ENCODE measurements at regions of chr14 and their contacts with region 1.

Region 1: GRCh38 chr14:92651106-92651757 is 97.2 kb downstream of the LGMN start:
- DNase-seq: peak; percentile 50 to 91 (median 87)
- ATAC-seq: peak; percentile 89
- H3K4me3 ChIP-seq: peak overlapping the region; percentile 82
- H3K4me3 Mint-ChIP-seq: peak overlapping the region; percentile 99 to 100 (median 100)
- H3K27ac ChIP-seq: peak overlapping the region; percentile 90
- H3K27ac Mint-ChIP-seq: peak overlapping the region; percentile 94 to 100 (median 99)
- H3K4me1 ChIP-seq: peaks cover 57 to 58% of the 10 kb centered on the region in 2 donors
- H3K4me1 Mint-ChIP-seq: peaks cover 65 to 82% (median 70%) of the 10 kb centered on the region in 7 donors
- H3K27me3 ChIP-seq: no peaks in the 10 kb centered on the region
- H3K27me3 Mint-ChIP-seq: no peaks in the 10 kb centered on the region

Region 2: DNA sequence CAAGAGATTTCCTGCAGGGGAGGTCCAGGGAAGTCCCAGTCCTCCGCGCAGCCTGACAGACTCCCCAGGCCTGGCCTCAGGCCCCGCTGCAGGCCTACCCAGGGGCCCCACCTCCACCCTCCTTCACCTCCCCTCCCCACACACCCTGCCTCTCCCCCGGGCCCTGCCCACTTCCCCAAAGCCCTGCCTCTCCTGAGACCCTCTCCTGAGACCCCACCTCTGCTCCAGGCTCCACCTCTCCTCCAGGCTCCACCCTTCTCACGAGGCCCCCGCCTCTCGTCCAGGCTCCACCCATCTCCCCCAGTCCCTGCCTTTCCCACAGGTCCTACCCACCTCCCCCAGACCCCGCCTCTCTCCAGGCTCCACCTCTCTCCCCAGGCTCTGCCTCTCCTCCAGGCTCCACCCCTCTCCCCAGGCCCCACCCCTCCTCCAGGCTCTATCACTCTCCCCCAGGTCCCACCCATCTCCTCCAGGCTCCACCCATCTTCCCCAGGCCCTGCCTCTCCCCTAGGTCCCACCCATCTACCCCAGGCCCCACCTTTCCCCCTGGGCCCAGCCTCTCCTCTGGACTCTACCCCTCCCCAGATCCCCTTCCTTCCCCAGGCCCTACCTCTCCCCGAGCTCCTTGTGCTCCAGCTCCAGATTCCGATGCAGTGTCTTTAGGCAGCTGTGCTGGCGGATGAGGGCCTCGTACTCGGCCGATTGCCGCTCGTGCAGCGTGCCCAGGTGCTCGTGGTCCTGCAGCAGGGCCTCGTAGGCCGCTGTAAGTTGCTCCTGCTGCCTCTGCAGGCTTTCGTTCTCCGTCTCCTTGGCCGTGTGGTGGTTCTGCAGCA is 1347.9 kb before region 1 on chr14:
- CTCF ChIA-PET with region 1: no interaction called
- POLR2A ChIA-PET with region 1: no interaction called
- intact Hi-C with region 1: no loop called
- DNase-seq: peak in 4 of 9 donors; percentile 27 to 62 (median 32)
- ATAC-seq: peak; percentile 81
- H3K4me3 ChIP-seq: no peak overlapping the region
- H3K4me3 Mint-ChIP-seq: no peak overlapping the region
- H3K27ac ChIP-seq: peak overlapping the region; percentile 39
- H3K27ac Mint-ChIP-seq: peak overlapping the region in 6 of 9 donors; percentile 32 to 85 (median 69)
- H3K4me1 ChIP-seq: peaks cover 0 to 4% of the 10 kb centered on the region in 2 donors
- H3K4me1 Mint-ChIP-seq: peaks cover 8 to 66% (median 26%) of the 10 kb centered on the region in 7 donors
- H3K27me3 ChIP-seq: no peaks in the 10 kb centered on the region
- H3K27me3 Mint-ChIP-seq: no peaks in the 10 kb centered on the region

Region 3: GRCh38 chr14:92121670-92122350 is 529.4 kb before region 1 on chr14 and contains the starts of genes CPSF2 and NDUFB1:
- CTCF ChIA-PET with region 1: no interaction called
- POLR2A ChIA-PET with region 1: interaction called, 13 read pairs
- intact Hi-C with region 1: loop called in 1 of 2 experiments (anchors 1 kb)
- DNase-seq: peak; percentile 74 to 87 (median 85)
- ATAC-seq: peak; percentile 92
- H3K4me3 ChIP-seq: peak within 1 kb of the TSS; percentile 78
- H3K4me3 Mint-ChIP-seq: peak within 1 kb of the TSS; percentile 88 to 100 (median 99)
- H3K27ac ChIP-seq: peak within 1 kb of the TSS; percentile 92
- H3K27ac Mint-ChIP-seq: peak within 1 kb of the TSS; percentile 96 to 100 (median 100)
- H3K4me1 ChIP-seq: peaks cover 17 to 19% of the 10 kb centered on the region in 2 donors
- H3K4me1 Mint-ChIP-seq: peaks cover 27 to 72% (median 53%) of the 10 kb centered on the region in 7 donors
- H3K27me3 ChIP-seq: no peaks in the 10 kb centered on the region
- H3K27me3 Mint-ChIP-seq: no peaks in the 10 kb centered on the region
- total RNA-seq, gene CPSF2: 30.2 to 77.4 (median 60.4) TPM
- total RNA-seq, gene NDUFB1: 55.1 to 107 (median 89.7) TPM

Region 4: GRCh38 chr14:92585981-92586937 is 65.0 kb before region 1 on chr14:
- CTCF ChIA-PET with region 1: interaction called, 3 read pairs
- POLR2A ChIA-PET with region 1: interaction called, 4 read pairs
- intact Hi-C with region 1: loop called (anchors 1 to 2 kb)
- DNase-seq: peak in 8 of 9 donors; percentile 46 to 78 (median 66)
- ATAC-seq: peak; percentile 80
- H3K4me3 ChIP-seq: peak overlapping the region; percentile 33
- H3K4me3 Mint-ChIP-seq: peak overlapping the region; percentile 67 to 87 (median 76)
- H3K27ac ChIP-seq: peak overlapping the region; percentile 70
- H3K27ac Mint-ChIP-seq: peak overlapping the region; percentile 90 to 98 (median 95)
- H3K4me1 ChIP-seq: peaks cover 89 to 90% of the 10 kb centered on the region in 2 donors
- H3K4me1 Mint-ChIP-seq: peaks cover 63 to 100% (median 96%) of the 10 kb centered on the region in 7 donors
- H3K27me3 ChIP-seq: no peaks in the 10 kb centered on the region
- H3K27me3 Mint-ChIP-seq: peaks cover 0 to 18% (median 0%) of the 10 kb centered on the region in 5 donors

Region 5: DNA sequence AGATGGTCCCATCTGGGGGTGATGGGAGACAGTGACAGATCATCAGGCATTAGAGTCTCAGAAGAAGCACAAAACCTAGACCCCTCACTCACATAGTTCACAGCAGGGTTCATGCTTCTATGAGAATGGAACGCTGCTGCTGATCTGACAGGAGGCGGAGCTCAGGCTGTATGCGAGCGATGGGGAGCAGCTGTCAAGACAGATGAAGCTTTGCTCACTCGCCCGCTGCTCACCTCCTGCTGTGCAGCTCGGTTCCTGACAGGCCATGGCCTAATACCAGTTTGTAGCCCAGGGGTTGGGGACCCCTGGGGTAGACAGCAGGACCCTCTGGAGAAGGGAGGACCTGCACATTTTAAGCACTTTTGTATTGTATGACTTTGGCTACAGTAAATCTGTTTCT is 14.0 kb before region 1 on chr14:
- CTCF ChIA-PET with region 1: interaction called, 3 read pairs
- POLR2A ChIA-PET with region 1: interaction called, 25 read pairs
- intact Hi-C with region 1: no loop called
- DNase-seq: no peak
- ATAC-seq: no peak
- H3K4me3 ChIP-seq: no peak overlapping the region
- H3K4me3 Mint-ChIP-seq: no peak overlapping the region
- H3K27ac ChIP-seq: no peak overlapping the region
- H3K27ac Mint-ChIP-seq: peak overlapping the region in 3 of 9 donors; percentile 46 to 64 (median 51)
- H3K4me1 ChIP-seq: no peaks in the 10 kb centered on the region
- H3K4me1 Mint-ChIP-seq: peaks cover 14 to 29% (median 19%) of the 10 kb centered on the region in 7 donors
- H3K27me3 ChIP-seq: no peaks in the 10 kb centered on the region
- H3K27me3 Mint-ChIP-seq: peaks cover 0 to 3% (median 0%) of the 10 kb centered on the region in 5 donors

Region 6: DNA sequence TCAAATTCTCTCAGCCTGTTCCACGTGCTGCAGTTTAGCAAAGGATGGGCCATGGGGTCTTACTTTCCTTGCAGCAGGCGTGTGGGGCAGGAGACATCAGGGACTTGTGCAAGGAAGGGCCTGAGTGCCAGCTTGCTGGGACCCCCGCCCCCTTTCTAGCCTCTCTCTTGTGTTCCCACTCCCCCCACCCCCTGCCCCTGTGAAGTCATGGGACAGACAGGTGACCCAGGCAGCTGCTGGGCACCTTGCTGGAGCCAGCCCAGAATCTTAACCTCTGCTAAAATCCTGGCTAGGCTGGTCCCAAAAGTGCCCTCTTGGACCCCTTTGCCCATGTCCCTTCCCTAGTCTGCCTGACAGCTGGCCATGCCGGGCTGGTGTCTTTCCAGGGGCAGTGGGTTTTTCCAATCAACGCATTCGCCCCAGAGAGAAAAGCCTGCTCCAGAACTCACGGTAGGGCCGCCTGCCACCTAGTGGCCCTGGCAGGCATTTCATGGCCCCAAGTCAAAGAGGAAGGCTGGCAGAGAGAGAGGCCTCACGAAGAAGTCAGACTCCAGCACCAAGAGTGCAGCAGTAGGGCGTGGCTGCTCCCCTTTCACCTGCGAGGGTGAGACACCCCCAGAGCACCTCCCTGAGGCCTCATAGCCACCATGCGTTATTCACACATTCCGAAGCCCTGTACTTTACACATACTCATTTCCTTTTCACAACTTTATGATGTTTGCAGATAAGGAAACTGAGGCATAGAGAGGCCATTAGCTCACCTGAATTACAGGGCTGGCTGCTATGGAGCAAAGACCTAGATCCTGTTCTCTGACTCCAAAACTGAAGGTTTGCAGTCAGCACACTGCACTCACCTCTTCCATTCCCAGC is 29.8 kb after region 1 on chr14:
- CTCF ChIA-PET with region 1: interaction called, 7 read pairs
- POLR2A ChIA-PET with region 1: interaction called, 10 read pairs
- intact Hi-C with region 1: loop called (anchors 1 to 2 kb)
- DNase-seq: peak; percentile 57 to 79 (median 73)
- ATAC-seq: peak; percentile 87
- H3K4me3 ChIP-seq: no peak overlapping the region
- H3K4me3 Mint-ChIP-seq: peak overlapping the region in 4 of 10 donors; percentile 8 to 36 (median 27)
- H3K27ac ChIP-seq: peak overlapping the region; percentile 63
- H3K27ac Mint-ChIP-seq: peak overlapping the region; percentile 34 to 95 (median 86)
- H3K4me1 ChIP-seq: peaks cover 19 to 24% of the 10 kb centered on the region in 2 donors
- H3K4me1 Mint-ChIP-seq: peaks cover 15 to 41% (median 26%) of the 10 kb centered on the region in 7 donors
- H3K27me3 ChIP-seq: no peaks in the 10 kb centered on the region
- H3K27me3 Mint-ChIP-seq: no peaks in the 10 kb centered on the region

Region 7: GRCh38 chr14:94317259-94317658 is 1666.0 kb after region 1 on chr14:
- CTCF ChIA-PET with region 1: no interaction called
- POLR2A ChIA-PET with region 1: no interaction called
- intact Hi-C with region 1: no loop called
- DNase-seq: no peak
- ATAC-seq: no peak
- H3K4me3 ChIP-seq: no peak overlapping the region
- H3K4me3 Mint-ChIP-seq: no peak overlapping the region
- H3K27ac ChIP-seq: no peak overlapping the region
- H3K27ac Mint-ChIP-seq: no peak overlapping the region
- H3K4me1 ChIP-seq: no peaks in the 10 kb centered on the region
- H3K4me1 Mint-ChIP-seq: no peaks in the 10 kb centered on the region
- H3K27me3 ChIP-seq: no peaks in the 10 kb centered on the region
- H3K27me3 Mint-ChIP-seq: peaks cover 0 to 18% (median 6%) of the 10 kb centered on the region in 5 donors